Natural killer cell (primary cell): ENCODE measurements at regions of chr1 and their contacts with region 1.

Region 1: DNA sequence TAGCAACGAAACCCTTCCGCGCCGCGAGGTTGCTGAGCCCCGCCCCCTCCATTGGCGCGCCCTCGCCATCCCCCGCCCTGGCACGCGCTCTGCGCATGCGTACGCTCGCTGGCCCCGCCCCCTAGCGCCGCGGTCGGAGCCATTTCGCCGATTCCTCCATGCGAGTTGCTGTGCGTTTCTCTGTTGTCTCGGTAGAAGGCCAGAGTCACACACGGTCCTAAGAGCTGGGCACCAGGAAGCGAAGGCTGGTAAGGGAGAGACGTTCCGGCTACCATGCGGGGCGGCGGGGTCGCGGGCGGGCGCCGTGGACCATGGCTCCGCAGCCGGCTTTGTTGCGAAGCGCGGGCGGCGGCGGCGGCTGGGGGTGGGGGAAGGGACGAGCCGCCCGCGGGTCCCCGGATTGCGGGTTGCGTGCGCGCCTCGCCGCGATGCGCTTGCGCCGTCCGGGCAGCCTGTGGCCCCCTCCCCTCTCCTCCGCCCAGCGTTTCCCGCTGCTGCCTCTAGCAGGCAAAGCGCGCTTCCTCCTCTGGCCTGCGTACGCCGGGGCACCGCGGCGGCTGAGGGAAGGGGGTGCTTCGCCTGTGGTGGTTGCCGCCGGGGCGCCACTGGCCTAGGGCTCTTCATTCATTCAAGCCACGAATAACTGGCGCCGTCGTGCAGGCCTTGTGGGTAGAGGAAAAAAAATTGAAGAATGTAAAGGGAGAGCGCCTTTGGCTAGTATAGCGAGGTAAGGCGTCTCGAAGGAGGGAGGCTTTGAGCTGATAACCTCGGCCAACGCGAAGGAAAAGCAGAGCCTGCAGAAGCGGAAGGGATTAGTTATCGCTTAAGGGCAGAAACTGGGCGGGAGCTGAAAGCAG is at the start of gene DHX9:
- DNase-seq: peak; percentile 97 to 98
- ATAC-seq: peak; percentile 80 to 92 (median 83)
- H3K4me3 ChIP-seq: peak within 1 kb of the TSS; percentile 63
- H3K4me3 Mint-ChIP-seq: peak within 1 kb of the TSS; percentile 99
- H3K27ac ChIP-seq: peak within 1 kb of the TSS; percentile 89
- H3K27ac Mint-ChIP-seq: peak within 1 kb of the TSS; percentile 92 to 94
- H3K4me1 ChIP-seq: peaks cover 21% of the 10 kb centered on the region
- H3K4me1 Mint-ChIP-seq: peaks cover 46 to 55% of the 10 kb centered on the region in 2 donors
- H3K27me3 ChIP-seq: no peaks in the 10 kb centered on the region
- H3K27me3 Mint-ChIP-seq: peaks cover 4 to 8% of the 10 kb centered on the region in 2 donors
- CTCF ChIP-seq: no peak
- total RNA-seq, gene DHX9: 208 to 226 (median 226) TPM

Region 2: GRCh38 chr1:182588500-182589452 is 250.7 kb before region 1 on chr1 and contains the start of gene RNASEL:
- intact Hi-C with region 1: loop called (anchors 2 kb)
- DNase-seq: peak; percentile 42 to 85
- ATAC-seq: peak; percentile 90 to 93 (median 91)
- H3K4me3 ChIP-seq: peak within 1 kb of the TSS; percentile 98
- H3K4me3 Mint-ChIP-seq: peak within 1 kb of the TSS; percentile 99
- H3K27ac ChIP-seq: peak within 1 kb of the TSS; percentile 99
- H3K27ac Mint-ChIP-seq: peak within 1 kb of the TSS; percentile 99
- H3K4me1 ChIP-seq: peaks cover 19% of the 10 kb centered on the region
- H3K4me1 Mint-ChIP-seq: peaks cover 48 to 53% of the 10 kb centered on the region in 2 donors
- H3K27me3 ChIP-seq: no peaks in the 10 kb centered on the region
- H3K27me3 Mint-ChIP-seq: peaks cover 0 to 7% of the 10 kb centered on the region in 2 donors
- CTCF ChIP-seq: no peak
- total RNA-seq, gene RNASEL: 3.3 to 5.8 (median 4.8) TPM

Region 3: GRCh38 chr1:182604169-182605164 is 235.0 kb before region 1 on chr1 and contains the start of gene RGS16:
- intact Hi-C with region 1: loop called (anchors 5 kb)
- DNase-seq: peak; percentile 77 to 92
- ATAC-seq: peak; percentile 93 to 96 (median 95)
- H3K4me3 ChIP-seq: peak within 1 kb of the TSS; percentile 18
- H3K4me3 Mint-ChIP-seq: peak within 1 kb of the TSS; percentile 74
- H3K27ac ChIP-seq: no peak within 1 kb of the TSS
- H3K27ac Mint-ChIP-seq: peak within 1 kb of the TSS; percentile 55 to 56
- H3K4me1 ChIP-seq: peaks cover 18% of the 10 kb centered on the region
- H3K4me1 Mint-ChIP-seq: peaks cover 15 to 16% of the 10 kb centered on the region in 2 donors
- H3K27me3 ChIP-seq: peaks cover 19% of the 10 kb centered on the region
- H3K27me3 Mint-ChIP-seq: peaks cover 17 to 30% of the 10 kb centered on the region in 2 donors
- CTCF ChIP-seq: no peak
- total RNA-seq, gene RGS16: 1.3 to 9.6 (median 4.2) TPM

Region 4: GRCh38 chr1:182614796-182615454 is 224.5 kb before region 1 on chr1:
- intact Hi-C with region 1: loop called (anchors 5 kb)
- DNase-seq: peak; percentile 53 to 72
- ATAC-seq: peak; percentile 45 to 61 (median 48)
- H3K4me3 ChIP-seq: peak overlapping the region; percentile 36
- H3K4me3 Mint-ChIP-seq: peak overlapping the region; percentile 89
- H3K27ac ChIP-seq: no peak overlapping the region
- H3K27ac Mint-ChIP-seq: peak overlapping the region; percentile 85 to 94
- H3K4me1 ChIP-seq: peaks cover 32% of the 10 kb centered on the region
- H3K4me1 Mint-ChIP-seq: peaks cover 35 to 39% of the 10 kb centered on the region in 2 donors
- H3K27me3 ChIP-seq: peaks cover 54% of the 10 kb centered on the region
- H3K27me3 Mint-ChIP-seq: peaks cover 75 to 88% of the 10 kb centered on the region in 2 donors
- CTCF ChIP-seq: no peak

Region 5: DNA sequence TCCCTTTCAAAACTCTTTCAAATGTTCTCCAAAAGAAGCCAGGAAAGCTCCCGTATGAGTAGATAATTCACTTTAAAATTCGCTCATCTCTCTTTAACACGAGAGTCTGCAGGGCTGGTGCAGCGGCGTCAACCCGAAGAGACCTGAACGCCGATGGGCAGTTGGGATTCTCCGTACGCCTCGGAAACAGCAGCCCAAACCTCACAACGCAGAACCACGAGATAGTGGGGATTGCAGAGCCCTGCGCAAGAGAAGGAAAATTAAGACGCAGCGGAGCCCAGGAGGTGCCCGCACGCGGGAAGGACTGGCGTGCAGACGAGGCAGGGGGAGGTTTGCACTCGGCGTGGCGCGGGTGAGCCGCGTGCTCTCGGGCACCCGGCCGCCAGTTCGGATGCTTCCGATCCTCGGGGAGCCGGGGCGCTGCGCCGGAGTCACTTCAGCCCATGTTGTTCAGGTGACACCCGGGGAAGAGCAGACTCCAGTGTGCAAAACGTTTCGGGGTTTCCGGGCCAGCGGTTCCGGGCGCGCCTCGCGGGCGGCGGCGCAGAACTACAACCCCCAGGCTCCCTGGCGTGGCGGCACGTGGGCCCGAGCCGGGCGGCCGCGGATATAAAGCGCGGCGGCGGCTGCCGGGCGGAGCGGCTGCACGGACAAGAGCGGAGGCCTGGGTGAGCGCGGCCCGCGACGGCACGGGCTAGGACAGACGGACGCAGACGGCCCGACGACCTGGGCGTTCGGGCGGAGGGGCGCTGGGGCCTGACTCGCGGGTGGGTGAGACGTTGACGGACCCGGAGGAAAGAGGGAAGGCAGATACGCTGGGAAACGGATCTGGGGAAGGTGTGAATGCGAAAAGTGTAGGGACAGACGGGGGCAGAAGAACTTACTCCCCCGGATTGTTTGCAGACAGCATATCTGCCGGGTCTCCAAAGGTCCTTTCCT is 50.0 kb before region 1 on chr1 and contains the start of gene NPL:
- intact Hi-C with region 1: loop called (anchors 2 kb)
- DNase-seq: peak; percentile 74 to 92
- ATAC-seq: peak; percentile 96
- H3K4me3 ChIP-seq: peak within 1 kb of the TSS; percentile 64
- H3K4me3 Mint-ChIP-seq: peak within 1 kb of the TSS; percentile 94
- H3K27ac ChIP-seq: peak within 1 kb of the TSS; percentile 48
- H3K27ac Mint-ChIP-seq: peak within 1 kb of the TSS; percentile 72 to 79
- H3K4me1 ChIP-seq: peaks cover 9% of the 10 kb centered on the region
- H3K4me1 Mint-ChIP-seq: peaks cover 12 to 13% of the 10 kb centered on the region in 2 donors
- H3K27me3 ChIP-seq: peaks cover 5% of the 10 kb centered on the region
- H3K27me3 Mint-ChIP-seq: peaks cover 7 to 30% of the 10 kb centered on the region in 2 donors
- CTCF ChIP-seq: no peak
- total RNA-seq, gene NPL: 5.2 to 10.6 (median 6.8) TPM

Region 6: GRCh38 chr1:183471743-183472487 is 632.5 kb after region 1 on chr1:
- intact Hi-C with region 1: loop called (anchors 10 kb)
- DNase-seq: peak; percentile 90 to 98
- ATAC-seq: peak; percentile 68 to 88 (median 74)
- H3K4me3 ChIP-seq: peak overlapping the region; percentile 80
- H3K4me3 Mint-ChIP-seq: peak overlapping the region; percentile 98
- H3K27ac ChIP-seq: peak overlapping the region; percentile 97
- H3K27ac Mint-ChIP-seq: peak overlapping the region; percentile 98 to 99
- H3K4me1 ChIP-seq: peaks cover 16% of the 10 kb centered on the region
- H3K4me1 Mint-ChIP-seq: peaks cover 23 to 35% of the 10 kb centered on the region in 2 donors
- H3K27me3 ChIP-seq: no peaks in the 10 kb centered on the region
- H3K27me3 Mint-ChIP-seq: peaks cover 0 to 7% of the 10 kb centered on the region in 2 donors
- CTCF ChIP-seq: no peak